ENCODE measurements at regions of chr2 and their contacts with region 1.

Region 1: DNA sequence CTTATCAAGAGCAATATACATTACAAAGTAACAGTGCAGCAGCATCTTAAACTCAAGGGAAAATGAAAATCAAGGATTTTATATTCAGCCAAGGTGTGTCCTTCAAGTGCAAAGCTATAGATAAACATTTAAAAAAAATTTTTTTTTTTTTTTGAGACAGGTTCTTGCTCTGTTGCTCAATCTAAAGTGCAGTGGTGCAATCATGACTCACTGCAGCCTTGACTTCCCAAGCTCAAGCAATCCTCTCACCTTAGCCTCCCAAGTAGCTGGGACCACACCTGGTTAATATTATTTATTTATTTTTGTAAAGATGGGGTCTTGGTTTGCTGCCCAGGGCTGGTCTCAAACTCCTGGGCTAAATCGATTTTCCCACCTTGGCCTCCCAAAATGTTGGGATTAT is 9.0 kb downstream of the CDKL4 start:
- DNase-seq: no peak
- H3K4me3 ChIP-seq: no peak overlapping the region
- CTCF ChIP-seq: no peak
- POLR2A ChIP-seq: no peak

Region 2: GRCh38 chr2:38947240-38948239 is 287.2 kb before region 1 on chr2:
- intact Hi-C with region 1: loop called (anchors 10 kb)
- DNase-seq: peak in 1 of 2 donors; percentile 46
- H3K4me3 ChIP-seq: no peak overlapping the region
- CTCF ChIP-seq: no peak
- POLR2A ChIP-seq: no peak

Measured in lower leg skin (tissue), 4 donors.